ENCODE measurements at regions of chr10 and their contacts with region 1.

Region 1: GRCh38 chr10:46022978-46023702 is 7.3 kb downstream of the NCOA4 start:
- DNase-seq: peak; percentile 91 to 97
- H3K4me3 ChIP-seq: peak overlapping the region; percentile 71
- H3K27ac ChIP-seq: peak overlapping the region; percentile 93
- H3K4me1 ChIP-seq: peaks cover 41% of the 10 kb centered on the region
- H3K27me3 ChIP-seq: no peaks in the 10 kb centered on the region
- CTCF ChIP-seq: peak; percentile 43; the same call in 1 of the 2 replicates

Region 2: GRCh38 chr10:46284293-46285229 is 261.4 kb after region 1 on chr10:
- CTCF ChIA-PET with region 1: no interaction called
- POLR2A ChIA-PET with region 1: no interaction called
- intact Hi-C with region 1: loop called (anchors 5 kb)
- DNase-seq: peak; percentile 77 to 96
- H3K4me3 ChIP-seq: peak overlapping the region; percentile 93
- H3K27ac ChIP-seq: peak overlapping the region; percentile 57
- H3K4me1 ChIP-seq: peaks cover 57% of the 10 kb centered on the region
- H3K27me3 ChIP-seq: no peaks in the 10 kb centered on the region
- CTCF ChIP-seq: no peak

Measured in PC-9 (cell line).